ENCODE measurements at regions of chr12 and their contacts with region 1.

Region 1: DNA sequence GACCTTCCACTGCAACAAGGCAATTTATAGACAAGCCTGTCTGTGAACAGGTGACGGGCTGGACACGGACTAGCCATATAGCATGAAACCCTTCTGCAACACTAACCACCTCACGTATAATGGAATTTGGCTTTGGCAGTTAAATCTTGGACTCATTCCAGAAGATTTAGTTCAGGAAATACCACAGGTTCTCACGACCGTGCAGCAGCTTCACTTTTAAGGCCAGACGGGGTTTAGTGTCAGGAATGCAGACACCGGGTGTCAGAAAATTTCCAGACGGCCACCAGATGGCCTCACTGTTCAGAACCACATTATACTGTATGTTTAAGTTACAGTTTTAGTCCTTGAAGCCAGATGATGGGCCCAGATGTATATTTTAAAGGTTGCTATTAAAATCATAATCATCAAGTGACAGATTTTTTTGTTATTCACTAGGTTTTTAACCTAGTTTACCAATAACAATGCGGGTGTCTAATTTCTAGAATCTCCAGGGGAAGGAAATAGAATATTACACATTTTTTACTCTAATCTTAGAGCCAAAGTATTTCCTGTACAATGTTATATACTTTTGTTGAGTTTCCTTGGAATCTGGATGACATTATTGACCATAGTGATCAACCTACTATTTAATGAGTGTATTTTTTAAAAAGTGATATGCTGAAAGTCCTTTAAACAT is 90.5 kb upstream of the TMPO start:
- H3K4me3 Mint-ChIP-seq: no peak overlapping the region
- H3K27ac Mint-ChIP-seq: no peak overlapping the region
- H3K4me1 Mint-ChIP-seq: peaks cover 8% of the 10 kb centered on the region
- H3K27me3 Mint-ChIP-seq: no peaks in the 10 kb centered on the region

Region 2: DNA sequence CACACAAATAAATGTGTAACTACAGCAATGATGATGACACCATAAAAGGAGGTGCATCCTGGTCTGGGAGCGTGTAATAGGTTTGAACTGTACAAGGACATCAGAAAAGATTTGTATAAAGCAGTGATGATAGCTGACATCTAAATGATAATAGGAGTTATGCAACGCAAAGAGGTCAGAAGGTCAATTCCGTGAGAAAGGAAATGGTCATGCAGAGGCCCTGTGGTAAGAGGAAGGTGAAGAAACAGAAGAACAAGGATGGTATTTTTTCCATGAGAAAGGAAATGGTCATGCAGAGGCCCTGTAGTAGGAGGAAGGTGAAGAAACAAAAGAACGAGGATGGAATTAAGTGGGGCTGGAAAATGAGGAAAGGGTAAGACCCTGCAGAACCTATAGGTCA is 16.2 kb before region 1 on chr12:
- intact Hi-C with region 1: no loop called
- H3K4me3 Mint-ChIP-seq: no peak overlapping the region
- H3K27ac Mint-ChIP-seq: no peak overlapping the region
- H3K4me1 Mint-ChIP-seq: peaks cover 17% of the 10 kb centered on the region
- H3K27me3 Mint-ChIP-seq: no peaks in the 10 kb centered on the region

Region 3: GRCh38 chr12:98470469-98471082 is 45.7 kb after region 1 on chr12:
- intact Hi-C with region 1: loop called (anchors 10 kb)
- H3K4me3 Mint-ChIP-seq: no peak overlapping the region
- H3K27ac Mint-ChIP-seq: no peak overlapping the region
- H3K4me1 Mint-ChIP-seq: peaks cover 29% of the 10 kb centered on the region
- H3K27me3 Mint-ChIP-seq: no peaks in the 10 kb centered on the region